Heart left ventricle (tissue), 16 donors: ENCODE measurements at regions of chr6 and their contacts with region 1.

Region 1: DNA sequence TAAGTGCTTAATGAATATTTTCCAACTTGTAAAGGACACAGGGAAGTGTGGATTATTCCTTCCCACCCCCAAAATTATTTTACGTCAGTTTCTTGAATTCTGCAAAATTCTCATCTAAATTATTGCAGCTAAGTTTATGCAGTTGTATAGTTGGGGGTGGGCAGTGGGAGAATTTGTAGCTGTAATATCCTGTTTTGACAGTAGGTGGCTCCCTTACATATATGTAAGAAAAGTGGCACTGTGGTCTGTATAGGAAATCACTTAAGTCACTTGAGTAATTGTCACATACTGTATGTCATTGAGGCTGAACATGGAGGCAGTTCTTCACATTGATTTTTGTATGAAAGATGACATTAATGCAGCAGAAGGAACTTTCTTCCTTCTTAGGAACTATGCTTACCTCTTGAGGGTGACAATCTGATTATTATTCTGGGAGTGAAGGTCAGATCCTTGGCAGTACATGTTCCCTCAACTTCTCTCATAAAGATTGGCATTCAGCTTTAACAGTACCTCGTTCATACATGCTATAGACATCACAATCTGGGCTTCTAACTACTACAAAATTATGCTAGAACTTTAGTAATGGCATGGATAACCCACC is 14.7 kb upstream of the CFAP206 start:
- DNase-seq: peak in 1 of 5 donors; percentile 20
- ATAC-seq: peak; percentile 58 to 81 (median 79)
- H3K4me3 ChIP-seq: no peak overlapping the region
- H3K27ac ChIP-seq: no peak overlapping the region
- H3K4me1 ChIP-seq: no peaks in the 10 kb centered on the region
- H3K27me3 ChIP-seq: no peaks in the 10 kb centered on the region
- CTCF ChIP-seq: peak; percentile 62 to 82 (median 74)
- POLR2A ChIP-seq: no peak

Region 2: GRCh38 chr6:87139236-87139635 is 253.9 kb before region 1 on chr6:
- intact Hi-C with region 1: loop called in 2 of 10 experiments (anchors 5 to 10 kb)
- DNase-seq: peak in 1 of 5 donors; percentile 16
- ATAC-seq: peak in 3 of 4 donors; percentile 42 to 56 (median 51)
- H3K4me3 ChIP-seq: no peak overlapping the region
- H3K27ac ChIP-seq: no peak overlapping the region
- H3K4me1 ChIP-seq: no peaks in the 10 kb centered on the region
- H3K27me3 ChIP-seq: peaks cover 0 to 10% (median 0%) of the 10 kb centered on the region in 9 donors
- CTCF ChIP-seq: peak; percentile 53 to 77 (median 69)
- POLR2A ChIP-seq: no peak

Region 3: GRCh38 chr6:87366072-87366827 is 26.9 kb before region 1 on chr6:
- intact Hi-C with region 1: no loop called
- DNase-seq: no peak
- ATAC-seq: no peak
- H3K4me3 ChIP-seq: no peak overlapping the region
- H3K27ac ChIP-seq: no peak overlapping the region
- H3K4me1 ChIP-seq: no peaks in the 10 kb centered on the region
- H3K27me3 ChIP-seq: no peaks in the 10 kb centered on the region
- CTCF ChIP-seq: no peak
- POLR2A ChIP-seq: no peak

Region 4: DNA sequence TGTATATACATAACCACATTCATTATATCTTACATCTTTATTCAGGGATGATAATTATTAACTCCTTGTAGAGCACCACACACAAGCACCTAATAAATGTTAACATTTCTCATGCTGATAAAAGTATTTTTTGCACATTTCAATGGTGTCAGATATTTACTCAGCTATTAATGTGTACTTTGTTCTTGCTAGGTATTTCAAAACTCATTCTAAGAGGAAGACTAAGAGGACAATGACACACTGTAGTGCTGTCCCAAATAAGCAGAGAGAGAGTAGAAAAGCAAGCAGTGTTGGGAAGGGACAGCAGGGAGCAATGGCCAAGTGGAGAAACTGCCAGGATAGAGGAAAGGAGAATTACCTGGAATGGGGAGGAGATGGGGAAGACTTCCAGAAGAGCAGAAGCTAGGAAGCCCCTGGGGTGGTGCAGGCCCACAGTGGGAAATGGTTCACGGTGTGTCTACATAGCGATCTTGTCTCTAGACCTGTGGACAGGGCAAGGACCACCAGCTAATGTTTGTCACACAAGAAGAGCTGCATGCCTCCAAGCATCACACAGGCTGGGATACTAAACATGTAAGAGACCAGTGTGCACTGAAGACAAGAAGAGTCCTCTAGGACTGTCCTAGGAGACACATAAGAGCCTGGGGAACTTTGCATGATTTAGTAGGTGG is 141.4 kb after region 1 on chr6:
- intact Hi-C with region 1: no loop called
- DNase-seq: no peak
- ATAC-seq: no peak
- H3K4me3 ChIP-seq: no peak overlapping the region
- H3K27ac ChIP-seq: no peak overlapping the region
- H3K4me1 ChIP-seq: peaks cover 0 to 3% (median 0%) of the 10 kb centered on the region in 12 donors
- H3K27me3 ChIP-seq: no peaks in the 10 kb centered on the region
- CTCF ChIP-seq: no peak
- POLR2A ChIP-seq: no peak

Region 5: GRCh38 chr6:87589693-87590549 is 196.8 kb after region 1 on chr6 and contains the starts of genes ORC3 and RARS2:
- intact Hi-C with region 1: loop called in 2 of 10 experiments (anchors 5 to 10 kb)
- DNase-seq: peak; percentile 95 to 99 (median 97)
- ATAC-seq: peak; percentile 100
- H3K4me3 ChIP-seq: peak within 1 kb of the TSS; percentile 60 to 96 (median 84)
- H3K27ac ChIP-seq: peak within 1 kb of the TSS; percentile 42 to 92 (median 82)
- H3K4me1 ChIP-seq: peaks cover 6 to 50% (median 30%) of the 10 kb centered on the region in 12 donors
- H3K27me3 ChIP-seq: no peaks in the 10 kb centered on the region
- CTCF ChIP-seq: peak in 1 of 12 donors; percentile 13
- POLR2A ChIP-seq: peak; percentile 9 to 89
- total RNA-seq, gene ORC3: 15.2 to 28.6 (median 20.8) TPM
- total RNA-seq, gene RARS2: 13.3 to 24.2 (median 20.3) TPM

Region 6: DNA sequence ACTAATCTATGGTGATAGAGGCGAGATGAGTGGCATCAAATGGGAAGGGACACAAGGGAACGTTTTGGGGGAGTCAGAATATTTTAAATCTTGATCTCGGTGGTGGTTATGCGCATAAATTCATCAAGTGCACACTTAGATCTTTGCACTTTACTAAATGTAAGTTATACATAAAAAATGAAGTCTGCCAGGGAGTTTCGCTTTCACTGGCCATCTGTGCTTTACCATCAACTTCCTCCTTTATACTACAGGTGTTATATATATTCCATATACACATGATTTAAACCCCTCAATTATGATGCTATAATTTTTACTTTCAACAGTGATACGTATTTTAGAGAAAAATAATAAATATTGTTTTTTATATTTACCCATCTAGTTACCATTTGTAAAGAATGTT is 406.5 kb after region 1 on chr6:
- intact Hi-C with region 1: loop called in 2 of 10 experiments (anchors 5 to 10 kb)
- DNase-seq: no peak
- ATAC-seq: no peak
- H3K4me3 ChIP-seq: no peak overlapping the region
- H3K27ac ChIP-seq: no peak overlapping the region
- H3K4me1 ChIP-seq: no peaks in the 10 kb centered on the region
- H3K27me3 ChIP-seq: no peaks in the 10 kb centered on the region
- CTCF ChIP-seq: no peak
- POLR2A ChIP-seq: no peak

Region 7: DNA sequence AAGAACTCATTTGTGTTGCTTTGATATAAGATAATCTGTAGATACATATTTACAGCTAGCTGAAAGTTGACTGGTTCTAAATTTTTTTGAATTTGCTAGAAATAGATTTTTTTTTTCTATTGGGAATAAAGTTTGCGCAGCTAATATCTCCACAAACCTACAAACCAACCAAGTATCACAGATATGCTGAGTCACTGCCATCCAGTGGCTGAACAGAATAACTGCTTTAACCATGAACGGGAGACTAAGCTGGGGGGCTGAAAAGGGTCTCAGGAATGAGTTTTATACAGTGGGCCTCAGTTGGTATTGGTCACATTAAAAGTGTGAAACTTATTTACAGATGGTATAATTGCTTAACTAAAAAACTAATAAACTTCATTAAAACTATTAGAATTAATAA is 1099.7 kb after region 1 on chr6:
- intact Hi-C with region 1: loop called in 3 of 10 experiments (anchors 5 to 10 kb)
- DNase-seq: no peak
- ATAC-seq: peak in 1 of 4 donors; percentile 47
- H3K4me3 ChIP-seq: no peak overlapping the region
- H3K27ac ChIP-seq: no peak overlapping the region
- H3K4me1 ChIP-seq: peaks cover 0 to 6% (median 0%) of the 10 kb centered on the region in 12 donors
- H3K27me3 ChIP-seq: no peaks in the 10 kb centered on the region
- CTCF ChIP-seq: peak in 11 of 12 donors; percentile 6 to 54 (median 37)
- POLR2A ChIP-seq: no peak

Region 8: DNA sequence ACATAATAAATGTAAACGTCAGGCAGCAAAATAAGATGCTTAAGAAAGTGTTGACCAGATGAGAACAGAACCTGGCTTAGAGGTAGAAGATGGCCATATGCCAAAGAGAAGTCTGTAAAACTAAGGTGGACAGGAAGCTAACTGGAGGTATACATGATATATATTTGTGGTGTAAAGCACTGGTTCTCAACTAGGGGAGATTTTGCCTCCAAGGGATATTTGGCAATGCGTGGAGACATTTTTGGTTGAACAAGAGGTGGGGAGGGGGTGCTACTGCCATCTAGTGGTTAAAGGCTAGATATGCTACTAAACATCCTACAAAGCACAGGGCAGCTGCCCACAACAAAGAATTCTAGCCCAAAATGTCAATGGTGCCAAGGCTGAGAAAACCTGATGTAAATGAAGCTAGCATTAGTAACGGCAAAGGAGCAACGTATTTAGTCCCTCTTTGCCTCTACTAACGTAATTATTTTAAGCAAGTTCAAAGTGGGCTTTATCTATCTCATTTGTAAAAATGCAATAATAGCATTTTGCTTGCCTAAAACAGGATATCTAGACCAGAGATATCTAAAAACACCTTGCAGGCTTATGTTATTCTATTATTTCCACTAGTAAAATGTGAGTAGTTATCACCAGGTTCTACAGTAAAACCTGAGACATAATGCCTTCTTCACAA is 1387.7 kb after region 1 on chr6:
- intact Hi-C with region 1: loop called in 1 of 10 experiments (anchors 5 kb)
- DNase-seq: peak in 4 of 5 donors; percentile 23 to 36 (median 27)
- ATAC-seq: peak in 3 of 4 donors; percentile 38 to 56 (median 44)
- H3K4me3 ChIP-seq: no peak overlapping the region
- H3K27ac ChIP-seq: no peak overlapping the region
- H3K4me1 ChIP-seq: peaks cover 0 to 2% (median 0%) of the 10 kb centered on the region in 12 donors
- H3K27me3 ChIP-seq: no peaks in the 10 kb centered on the region
- CTCF ChIP-seq: peak; percentile 74 to 95 (median 86)
- POLR2A ChIP-seq: no peak

Region 9: DNA sequence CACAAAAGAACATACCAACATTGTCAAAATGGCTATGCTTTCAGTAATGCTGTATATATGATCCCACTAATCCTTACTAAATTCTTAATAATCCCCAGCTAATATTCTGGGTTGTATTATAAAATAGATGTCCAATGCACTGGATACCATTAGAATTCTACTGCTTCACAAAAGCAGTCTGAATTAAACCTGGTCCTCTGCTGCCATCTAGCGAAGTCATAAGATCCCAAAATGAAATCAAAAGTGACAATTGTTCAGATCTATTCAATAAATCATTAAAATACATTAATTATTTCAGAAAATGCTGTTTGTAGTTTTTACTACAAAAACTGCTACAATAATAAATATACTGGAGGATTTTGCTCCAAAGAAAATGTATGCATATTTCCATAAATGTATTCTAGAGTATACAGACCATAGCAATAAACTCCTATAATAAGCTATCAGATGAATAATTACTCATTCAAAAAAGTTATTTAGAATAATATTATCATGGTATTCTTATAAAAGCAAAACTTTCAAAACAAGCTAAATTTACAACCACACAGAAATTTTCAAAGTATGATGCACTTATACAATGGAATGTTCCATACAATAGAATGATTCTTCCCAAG is 1477.7 kb after region 1 on chr6:
- intact Hi-C with region 1: loop called in 4 of 10 experiments (anchors 5 to 10 kb)
- DNase-seq: peak in 2 of 5 donors; percentile 26 to 32
- ATAC-seq: peak in 1 of 4 donors; percentile 39
- H3K4me3 ChIP-seq: no peak overlapping the region
- H3K27ac ChIP-seq: no peak overlapping the region
- H3K4me1 ChIP-seq: peaks cover 0 to 16% (median 0%) of the 10 kb centered on the region in 12 donors
- H3K27me3 ChIP-seq: no peaks in the 10 kb centered on the region
- CTCF ChIP-seq: peak; percentile 50 to 82 (median 67)
- POLR2A ChIP-seq: no peak